Naive thymus-derived CD4-positive, alpha-beta T cell (primary cell): ENCODE measurements at regions of chr5 and their contacts with region 1.

Region 1: DNA sequence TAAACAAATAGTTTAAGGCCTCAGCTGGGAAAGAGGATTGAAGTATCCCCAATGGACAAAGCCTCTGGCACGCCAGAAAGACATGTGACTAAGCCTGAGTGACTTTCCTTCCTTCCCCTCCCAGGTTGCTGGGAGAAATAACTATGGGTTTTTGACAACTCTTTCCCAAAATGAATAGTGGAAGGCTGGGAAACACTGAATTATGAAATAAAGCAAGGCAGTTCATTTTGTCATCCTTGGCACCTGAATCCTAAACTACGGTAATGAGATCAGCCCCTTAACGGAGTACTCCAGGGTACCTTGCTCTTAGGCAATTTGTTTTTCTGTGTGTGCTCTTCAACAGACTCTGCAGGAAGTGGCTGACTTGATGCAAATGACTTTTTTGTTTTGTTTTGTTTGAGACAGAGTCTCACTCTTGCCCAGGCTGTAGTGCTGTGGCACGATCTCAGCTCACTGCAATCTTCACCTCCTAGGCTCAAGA is 75.2 kb downstream of the LMNB1 start:
- DNase-seq: peak in 7 of 9 donors; percentile 38 to 72 (median 63)
- ATAC-seq: peak; percentile 81
- H3K4me3 ChIP-seq: peak overlapping the region; percentile 13
- H3K4me3 Mint-ChIP-seq: peak overlapping the region; percentile 71 to 91 (median 84)
- H3K27ac ChIP-seq: peak overlapping the region; percentile 67
- H3K27ac Mint-ChIP-seq: peak overlapping the region; percentile 95 to 99 (median 99)
- H3K4me1 ChIP-seq: peaks cover 12 to 33% of the 10 kb centered on the region in 2 donors
- H3K4me1 Mint-ChIP-seq: peaks cover 23 to 76% (median 67%) of the 10 kb centered on the region in 7 donors
- H3K27me3 ChIP-seq: no peaks in the 10 kb centered on the region
- H3K27me3 Mint-ChIP-seq: no peaks in the 10 kb centered on the region

Region 2: DNA sequence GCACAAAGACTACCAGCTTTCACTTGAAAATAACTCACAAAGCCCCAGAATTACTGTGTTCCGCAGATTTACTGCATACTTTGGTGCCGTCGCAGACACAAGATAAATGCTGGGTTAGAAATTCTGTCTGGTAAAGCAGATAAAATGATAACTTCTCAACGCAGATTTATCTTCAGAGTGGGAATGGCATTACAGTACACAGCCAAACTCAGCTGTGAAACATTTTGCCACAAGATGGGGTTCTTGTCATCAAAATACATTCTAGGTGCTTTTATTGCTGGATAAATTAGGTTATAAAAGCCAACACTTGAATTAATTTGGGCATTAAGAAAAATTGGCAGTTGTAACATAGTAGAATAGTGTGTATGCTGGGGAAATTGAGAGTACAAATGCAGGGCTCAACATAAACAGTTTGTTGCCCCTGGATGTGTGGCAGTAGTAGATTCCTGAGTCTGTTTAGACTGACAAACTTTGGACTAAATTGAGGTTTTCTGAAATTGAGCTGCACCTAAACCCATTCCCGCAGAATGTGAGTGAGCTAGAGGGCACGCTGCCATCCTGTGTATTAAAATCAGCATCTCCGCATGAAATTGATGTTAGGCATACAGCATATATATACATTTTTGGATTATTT is 14.1 kb before region 1 on chr5:
- CTCF ChIA-PET with region 1: interaction called, 6 read pairs
- POLR2A ChIA-PET with region 1: interaction called, 23 read pairs
- intact Hi-C with region 1: loop called in 1 of 2 experiments (anchors 1 kb)
- DNase-seq: peak in 5 of 9 donors; percentile 21 to 45 (median 31)
- ATAC-seq: peak; percentile 51
- H3K4me3 ChIP-seq: no peak overlapping the region
- H3K4me3 Mint-ChIP-seq: no peak overlapping the region
- H3K27ac ChIP-seq: no peak overlapping the region
- H3K27ac Mint-ChIP-seq: peak overlapping the region in 1 of 9 donors; percentile 30
- H3K4me1 ChIP-seq: no peaks in the 10 kb centered on the region
- H3K4me1 Mint-ChIP-seq: peaks cover 0 to 8% (median 0%) of the 10 kb centered on the region in 7 donors
- H3K27me3 ChIP-seq: no peaks in the 10 kb centered on the region
- H3K27me3 Mint-ChIP-seq: no peaks in the 10 kb centered on the region

Region 3: GRCh38 chr5:126972062-126972895 is 120.1 kb after region 1 on chr5:
- CTCF ChIA-PET with region 1: no interaction called
- POLR2A ChIA-PET with region 1: interaction called, 3 read pairs
- intact Hi-C with region 1: loop called (anchors 5 kb)
- DNase-seq: peak in 7 of 9 donors; percentile 12 to 44 (median 32)
- ATAC-seq: peak; percentile 80
- H3K4me3 ChIP-seq: peak overlapping the region; percentile 34
- H3K4me3 Mint-ChIP-seq: peak overlapping the region; percentile 62 to 93 (median 86)
- H3K27ac ChIP-seq: peak overlapping the region; percentile 53
- H3K27ac Mint-ChIP-seq: peak overlapping the region; percentile 79 to 97 (median 87)
- H3K4me1 ChIP-seq: peaks cover 7 to 21% of the 10 kb centered on the region in 2 donors
- H3K4me1 Mint-ChIP-seq: peaks cover 24 to 56% (median 38%) of the 10 kb centered on the region in 7 donors
- H3K27me3 ChIP-seq: no peaks in the 10 kb centered on the region
- H3K27me3 Mint-ChIP-seq: no peaks in the 10 kb centered on the region

Region 4: GRCh38 chr5:127072861-127073846 is 221.0 kb after region 1 on chr5 and contains the start of gene C5orf63:
- CTCF ChIA-PET with region 1: no interaction called
- POLR2A ChIA-PET with region 1: interaction called, 5 read pairs
- intact Hi-C with region 1: loop called (anchors 2 kb)
- DNase-seq: peak; percentile 41 to 78 (median 69)
- ATAC-seq: peak; percentile 91
- H3K4me3 ChIP-seq: peak within 1 kb of the TSS; percentile 83
- H3K4me3 Mint-ChIP-seq: peak within 1 kb of the TSS; percentile 89 to 100 (median 92)
- H3K27ac ChIP-seq: peak within 1 kb of the TSS; percentile 69
- H3K27ac Mint-ChIP-seq: peak within 1 kb of the TSS; percentile 74 to 98 (median 93)
- H3K4me1 ChIP-seq: peaks cover 8 to 10% of the 10 kb centered on the region in 2 donors
- H3K4me1 Mint-ChIP-seq: peaks cover 17 to 39% (median 29%) of the 10 kb centered on the region in 7 donors
- H3K27me3 ChIP-seq: no peaks in the 10 kb centered on the region
- H3K27me3 Mint-ChIP-seq: no peaks in the 10 kb centered on the region
- total RNA-seq, gene C5orf63: 9.2 to 20.7 (median 11.9) TPM

Region 5: DNA sequence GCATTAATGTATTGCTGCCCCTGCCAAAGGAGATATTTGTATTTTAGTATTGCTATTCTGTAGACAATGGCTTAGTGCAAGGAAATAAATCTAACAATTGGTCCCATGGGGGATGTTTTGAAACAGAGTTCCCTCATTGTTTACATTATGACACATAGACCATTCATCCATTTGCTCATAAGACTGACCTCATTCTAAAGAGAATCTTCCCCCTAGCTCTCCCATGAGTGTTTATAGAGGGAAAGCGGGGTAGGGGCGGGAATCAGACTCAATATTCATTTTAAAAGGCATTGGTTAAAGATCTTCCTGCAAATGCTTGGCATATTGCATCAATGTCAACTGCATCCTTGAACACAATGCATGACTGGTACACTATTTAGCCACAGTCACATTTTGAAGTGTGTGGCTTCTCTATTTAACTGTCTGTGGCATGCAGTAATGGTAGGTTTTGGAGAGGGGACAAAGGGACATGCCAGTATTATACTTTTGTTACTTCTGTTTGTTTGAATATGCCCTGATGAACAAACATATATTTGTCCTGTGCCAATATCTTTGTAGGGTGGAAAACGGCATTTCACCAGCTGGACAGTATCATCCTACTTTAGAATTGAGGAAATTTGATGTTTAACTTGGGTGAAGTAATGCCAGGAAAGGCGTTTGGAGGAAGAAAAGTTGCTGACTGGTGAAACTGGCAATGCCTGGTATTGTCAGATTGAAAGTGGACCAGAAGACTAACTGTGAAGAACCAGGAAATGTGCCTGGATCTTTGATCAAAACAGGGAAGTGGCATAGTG is 354.4 kb after region 1 on chr5:
- CTCF ChIA-PET with region 1: no interaction called
- POLR2A ChIA-PET with region 1: no interaction called
- intact Hi-C with region 1: no loop called
- DNase-seq: no peak
- ATAC-seq: no peak
- H3K4me3 ChIP-seq: no peak overlapping the region
- H3K4me3 Mint-ChIP-seq: no peak overlapping the region
- H3K27ac ChIP-seq: no peak overlapping the region
- H3K27ac Mint-ChIP-seq: no peak overlapping the region
- H3K4me1 ChIP-seq: no peaks in the 10 kb centered on the region
- H3K4me1 Mint-ChIP-seq: no peaks in the 10 kb centered on the region
- H3K27me3 ChIP-seq: no peaks in the 10 kb centered on the region
- H3K27me3 Mint-ChIP-seq: peaks cover 5 to 23% (median 7%) of the 10 kb centered on the region in 5 donors

Region 6: DNA sequence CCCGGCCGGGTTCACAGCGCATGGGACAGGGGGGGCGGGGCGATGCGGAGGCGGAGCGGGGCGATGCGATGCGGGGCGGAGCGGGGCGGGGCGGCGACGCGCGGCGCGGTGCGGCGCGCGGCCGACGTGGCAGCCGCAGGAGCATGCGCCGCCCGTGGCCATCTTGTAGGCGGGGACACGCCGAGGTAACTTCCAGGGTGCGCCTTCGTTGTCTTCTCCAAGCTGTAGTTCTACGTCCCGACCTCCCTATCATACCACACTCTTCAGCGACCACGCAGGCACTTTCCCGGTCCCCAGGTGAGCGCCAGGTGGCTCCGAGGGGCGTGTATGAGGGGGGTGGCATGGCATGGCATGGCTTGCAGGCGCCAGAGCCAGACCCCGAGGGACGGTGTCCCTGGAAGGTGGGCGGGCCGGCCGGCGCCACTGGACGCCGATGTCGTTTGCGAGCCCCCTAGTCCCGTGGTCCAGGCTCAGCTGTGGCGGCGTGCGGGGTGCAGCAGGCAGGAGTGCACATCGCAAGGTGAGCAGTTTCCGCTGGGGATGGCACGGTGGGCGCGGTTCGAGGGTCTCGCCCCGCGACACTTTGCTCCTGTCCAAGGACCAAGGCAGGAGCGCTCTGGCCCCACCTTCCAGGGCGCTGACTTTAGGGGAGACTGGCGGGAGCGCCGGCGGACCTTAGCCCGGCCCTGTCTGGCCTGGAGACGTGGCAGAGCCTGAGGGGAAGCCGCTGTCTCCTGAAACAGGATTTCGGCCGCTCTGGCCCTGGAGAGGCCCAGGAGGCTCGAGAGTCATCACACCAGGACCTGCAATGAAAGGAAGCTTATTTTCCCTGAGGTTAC is 665.6 kb after region 1 on chr5 and contains the start of gene PRRC1:
- CTCF ChIA-PET with region 1: no interaction called
- POLR2A ChIA-PET with region 1: no interaction called
- intact Hi-C with region 1: loop called in 1 of 2 experiments (anchors 5 kb)
- DNase-seq: peak; percentile 63 to 80 (median 74)
- ATAC-seq: peak; percentile 99
- H3K4me3 ChIP-seq: peak within 1 kb of the TSS; percentile 94
- H3K4me3 Mint-ChIP-seq: peak within 1 kb of the TSS; percentile 87 to 92 (median 89)
- H3K27ac ChIP-seq: peak within 1 kb of the TSS; percentile 89
- H3K27ac Mint-ChIP-seq: peak within 1 kb of the TSS; percentile 48 to 91 (median 82)
- H3K4me1 ChIP-seq: peaks cover 0 to 18% of the 10 kb centered on the region in 2 donors
- H3K4me1 Mint-ChIP-seq: peaks cover 25 to 48% (median 38%) of the 10 kb centered on the region in 7 donors
- H3K27me3 ChIP-seq: no peaks in the 10 kb centered on the region
- H3K27me3 Mint-ChIP-seq: peaks cover under 1 to 7% (median 6%) of the 10 kb centered on the region in 5 donors
- total RNA-seq, gene PRRC1: 34.6 to 56.6 (median 49.4) TPM